A549 (cell line): ENCODE measurements at regions of chr21 and their contacts with region 1.

Region 1: GRCh38 chr21:32257962-32258785 is 20.7 kb downstream of the MIS18A start:
- DNase-seq: peak; percentile 47 to 70
- ATAC-seq: peak; percentile 92 to 94
- H3K4me3 ChIP-seq: no peak overlapping the region
- H3K27ac ChIP-seq: no peak overlapping the region
- H3K4me1 ChIP-seq: peaks cover 4% of the 10 kb centered on the region; the same call in 1 of the 3 replicates
- CTCF ChIP-seq: peak; percentile 67
- EP300 ChIP-seq: no peak
- POLR2A ChIP-seq: no peak
- RAD21 ChIP-seq: peak; percentile 80 to 82

Region 2: GRCh38 chr21:31781737-31782136 is 476.4 kb before region 1 on chr21:
- CTCF ChIA-PET with region 1: interaction called, 26 read pairs
- POLR2A ChIA-PET with region 1: no interaction called
- DNase-seq: peak in 1 of 2 experiments; percentile 4
- ATAC-seq: peak in 1 of 2 experiments; percentile 24; a peak in 1 of 6 replicates
- H3K4me3 ChIP-seq: no peak overlapping the region
- H3K27ac ChIP-seq: no peak overlapping the region
- H3K4me1 ChIP-seq: no peaks in the 10 kb centered on the region
- CTCF ChIP-seq: no peak
- EP300 ChIP-seq: no peak
- POLR2A ChIP-seq: no peak
- RAD21 ChIP-seq: no peak

Region 3: GRCh38 chr21:31866077-31866511 is 392.1 kb before region 1 on chr21:
- CTCF ChIA-PET with region 1: interaction called, 16 read pairs
- POLR2A ChIA-PET with region 1: no interaction called
- DNase-seq: peak; percentile 62 to 80
- ATAC-seq: peak; percentile 91 to 99
- H3K4me3 ChIP-seq: no peak overlapping the region
- H3K27ac ChIP-seq: no peak overlapping the region
- H3K4me1 ChIP-seq: no peaks in the 10 kb centered on the region
- CTCF ChIP-seq: peak; percentile 67
- EP300 ChIP-seq: no peak
- POLR2A ChIP-seq: no peak
- RAD21 ChIP-seq: peak; percentile 59 to 62

Region 4: GRCh38 chr21:31873696-31874599 is 384.2 kb before region 1 on chr21:
- CTCF ChIA-PET with region 1: interaction called, 22 read pairs
- POLR2A ChIA-PET with region 1: no interaction called
- DNase-seq: peak; percentile 32 to 36
- ATAC-seq: peak; percentile 71 to 89
- H3K4me3 ChIP-seq: peak overlapping the region; percentile 74
- H3K27ac ChIP-seq: peak overlapping the region; percentile 74 to 90
- H3K4me1 ChIP-seq: no peaks in the 10 kb centered on the region
- CTCF ChIP-seq: peak; percentile 60
- EP300 ChIP-seq: no peak
- POLR2A ChIP-seq: no peak
- RAD21 ChIP-seq: peak in 1 of 2 experiments; percentile 60; a peak in 3 of 5 replicates

Region 5: DNA sequence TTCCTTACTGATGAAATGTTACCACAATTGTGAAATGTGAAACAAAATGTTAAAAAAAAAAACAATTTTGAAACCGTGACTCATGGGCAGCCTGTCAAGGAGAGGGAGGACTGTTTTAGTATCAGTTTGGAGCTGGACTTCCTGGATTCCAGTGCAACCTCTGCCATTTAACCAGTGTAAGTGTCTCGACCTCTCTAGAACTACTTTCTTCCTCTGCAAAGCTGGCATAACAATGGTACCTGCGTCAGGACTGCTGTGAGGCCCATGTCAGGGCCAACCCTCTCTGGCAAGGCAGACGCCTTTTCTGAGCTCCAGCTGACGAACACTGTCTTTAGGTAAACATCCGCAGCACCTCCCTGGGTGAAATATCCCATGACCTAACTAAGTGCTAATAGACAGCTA is 113.7 kb after region 1 on chr21:
- CTCF ChIA-PET with region 1: no interaction called
- POLR2A ChIA-PET with region 1: no interaction called
- DNase-seq: peak in 1 of 2 experiments; percentile 56
- ATAC-seq: peak; percentile 51 to 70; a peak in 5 of 6 replicates
- H3K4me3 ChIP-seq: no peak overlapping the region
- H3K27ac ChIP-seq: peak overlapping the region; percentile 58 to 62; a peak in 5 of 6 replicates
- H3K4me1 ChIP-seq: peaks cover 34% of the 10 kb centered on the region
- CTCF ChIP-seq: no peak
- EP300 ChIP-seq: peak; percentile 24 to 52; a peak in 2 of 5 replicates
- POLR2A ChIP-seq: no peak
- RAD21 ChIP-seq: no peak